ENCODE measurements at regions of chr2 and their contacts with region 1.

Region 1: DNA sequence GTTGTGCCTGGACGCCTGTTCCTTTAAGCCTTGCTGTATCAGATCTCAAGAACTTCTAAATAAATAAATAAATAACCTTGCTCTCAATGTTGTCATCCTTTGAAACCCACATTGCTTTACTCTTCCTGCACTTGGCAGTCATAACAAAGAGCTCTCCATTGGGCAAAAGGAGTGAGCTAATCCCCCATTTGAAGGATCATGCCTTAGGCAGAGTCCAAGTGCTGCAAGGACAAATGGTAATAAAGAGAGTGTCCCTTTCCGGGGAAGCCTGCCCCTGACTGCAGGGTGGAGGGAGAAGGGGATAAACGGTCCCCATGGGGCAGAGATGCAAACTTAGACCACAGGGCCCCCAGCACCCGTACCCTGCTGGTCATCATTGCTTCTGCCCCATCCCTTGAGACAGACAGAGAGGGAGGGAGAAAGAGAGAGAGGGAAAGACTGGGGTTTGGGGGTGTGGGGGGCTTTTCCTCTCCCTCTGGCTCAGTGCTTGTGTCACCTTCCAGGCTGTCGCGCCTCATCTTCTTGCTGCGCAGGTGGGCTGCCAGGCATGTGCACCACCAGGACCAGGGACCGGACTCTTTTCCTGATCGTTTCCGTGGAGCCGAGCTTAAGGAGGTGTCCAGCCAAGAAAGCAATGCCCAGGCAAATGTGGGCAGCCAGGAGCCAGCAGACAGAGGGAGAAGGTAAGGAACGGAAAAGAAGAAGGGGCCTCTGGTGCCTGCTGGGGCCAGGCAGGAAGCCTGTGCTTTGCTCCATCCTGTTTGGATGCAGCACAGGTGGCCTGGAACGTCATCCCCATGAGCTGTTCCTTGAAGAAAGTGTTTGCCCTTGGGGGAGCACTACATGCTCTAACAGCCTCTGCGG is 33.6 kb downstream of the CNGA3 start:
- DNase-seq: peak in 2 of 42 donors; percentile 31 to 33

Region 2: DNA sequence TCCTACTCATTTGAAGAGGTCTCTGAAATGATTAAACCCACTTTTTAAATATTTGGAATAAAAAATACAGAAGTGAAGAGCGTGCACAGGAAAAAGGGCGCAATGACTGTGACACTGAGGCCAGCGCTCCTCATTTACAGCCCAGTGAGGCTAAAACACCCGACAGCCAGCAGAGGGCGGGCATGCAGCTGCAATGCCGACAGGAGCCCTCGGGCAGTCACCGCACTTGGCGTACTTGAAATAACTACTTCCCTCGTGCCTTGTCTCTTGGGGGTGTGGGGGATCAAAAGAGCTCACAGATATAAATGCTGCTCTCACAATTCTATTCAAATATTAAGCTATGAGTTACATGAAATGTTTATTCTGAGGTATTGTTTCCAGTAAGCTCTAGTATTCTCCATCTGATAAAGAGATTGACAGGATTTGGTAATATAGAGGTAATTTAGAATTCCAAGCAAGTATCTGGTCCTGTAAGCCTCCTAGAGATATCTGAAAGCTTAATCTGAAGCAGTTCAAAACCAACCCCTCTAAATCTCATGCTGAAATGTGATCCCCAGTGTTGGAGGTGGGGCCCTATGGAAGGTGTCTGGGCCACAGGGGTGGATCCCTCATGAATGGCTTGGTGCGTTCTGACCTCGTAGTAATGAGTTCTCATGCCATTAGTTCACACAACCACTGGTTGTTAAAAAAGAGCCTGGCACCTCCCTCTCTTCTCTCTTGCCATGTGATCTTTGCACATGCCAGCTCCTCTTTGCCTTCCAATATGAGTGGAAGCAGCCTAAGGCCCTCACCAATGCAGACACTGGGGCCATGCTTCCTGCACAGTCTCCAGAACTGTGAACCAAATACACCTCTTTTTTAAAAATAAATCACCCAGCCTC is 572.9 kb before region 1 on chr2:
- intact Hi-C with region 1: loop called (anchors 5 kb)
- DNase-seq: peak; percentile 75 to 92 (median 84)

Region 3: DNA sequence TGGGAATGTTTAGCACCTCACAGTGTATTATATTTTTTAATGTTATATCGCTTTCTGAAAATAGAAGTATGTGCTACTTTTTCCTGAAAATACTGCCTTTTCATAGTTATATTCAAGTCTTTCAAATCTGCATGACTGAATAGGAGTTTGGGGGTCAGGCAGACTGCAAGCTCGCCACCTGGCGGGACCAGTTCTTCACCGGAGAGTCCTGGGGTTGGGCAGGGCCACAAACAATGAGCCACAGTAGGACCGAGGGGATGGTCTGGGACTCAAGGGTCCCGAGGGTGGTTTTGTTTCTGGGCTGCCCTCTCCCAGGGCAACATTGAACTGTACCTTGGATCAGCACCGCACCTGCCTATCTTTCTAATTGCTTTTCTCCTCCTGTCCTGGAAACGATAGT is 222.3 kb before region 1 on chr2:
- intact Hi-C with region 1: no loop called
- DNase-seq: peak in 1 of 42 donors; percentile 14

Measured in head of caudate nucleus (tissue), 42 donors.